Naive thymus-derived CD4-positive, alpha-beta T cell (primary cell): ENCODE measurements at regions of chr10 and their contacts with region 1.

Region 1: GRCh38 chr10:114304017-114304570 is 65.0 kb downstream of the VWA2 start:
- DNase-seq: peak; percentile 19 to 67 (median 52)
- ATAC-seq: peak; percentile 60
- H3K4me3 ChIP-seq: peak overlapping the region; percentile 68
- H3K4me3 Mint-ChIP-seq: peak overlapping the region; percentile 83 to 94 (median 92)
- H3K27ac ChIP-seq: peak overlapping the region; percentile 6
- H3K27ac Mint-ChIP-seq: peak overlapping the region in 8 of 9 donors; percentile 4 to 86 (median 68)
- H3K4me1 ChIP-seq: peaks cover 4 to 5% of the 10 kb centered on the region in 2 donors
- H3K4me1 Mint-ChIP-seq: peaks cover 9 to 13% (median 12%) of the 10 kb centered on the region in 7 donors
- H3K27me3 ChIP-seq: no peaks in the 10 kb centered on the region
- H3K27me3 Mint-ChIP-seq: no peaks in the 10 kb centered on the region

Region 2: DNA sequence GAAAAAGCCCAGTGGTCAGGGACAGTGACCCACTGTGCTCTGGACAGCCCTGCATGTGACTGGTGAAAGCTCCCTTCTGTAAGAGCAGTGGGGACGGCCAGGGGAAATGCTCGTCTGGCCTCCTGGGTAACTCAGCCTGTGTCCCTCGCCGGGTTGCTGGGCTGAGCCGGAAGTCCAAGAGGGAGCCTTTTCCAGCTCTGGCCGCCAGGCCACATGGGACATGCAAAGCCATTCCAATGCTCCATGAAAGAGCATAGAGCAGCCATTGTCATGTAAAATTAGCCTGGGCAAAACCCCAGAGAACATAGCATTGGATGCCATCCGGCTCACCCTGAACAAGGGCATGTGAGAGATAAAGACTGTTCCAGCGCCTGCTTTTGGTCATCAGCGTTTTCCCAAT is 325.3 kb before region 1 on chr10:
- CTCF ChIA-PET with region 1: no interaction called
- POLR2A ChIA-PET with region 1: no interaction called
- intact Hi-C with region 1: no loop called
- DNase-seq: no peak
- ATAC-seq: no peak
- H3K4me3 ChIP-seq: no peak overlapping the region
- H3K4me3 Mint-ChIP-seq: no peak overlapping the region
- H3K27ac ChIP-seq: no peak overlapping the region
- H3K27ac Mint-ChIP-seq: no peak overlapping the region
- H3K4me1 ChIP-seq: peaks cover 5 to 10% of the 10 kb centered on the region in 2 donors
- H3K4me1 Mint-ChIP-seq: peaks cover 6 to 18% (median 11%) of the 10 kb centered on the region in 7 donors
- H3K27me3 ChIP-seq: no peaks in the 10 kb centered on the region
- H3K27me3 Mint-ChIP-seq: peaks cover 0 to 53% (median 15%) of the 10 kb centered on the region in 5 donors

Region 3: GRCh38 chr10:114288424-114289095 is 15.5 kb before region 1 on chr10:
- CTCF ChIA-PET with region 1: no interaction called
- POLR2A ChIA-PET with region 1: no interaction called
- intact Hi-C with region 1: no loop called
- DNase-seq: no peak
- ATAC-seq: no peak
- H3K4me3 ChIP-seq: no peak overlapping the region
- H3K4me3 Mint-ChIP-seq: no peak overlapping the region
- H3K27ac ChIP-seq: no peak overlapping the region
- H3K27ac Mint-ChIP-seq: no peak overlapping the region
- H3K4me1 ChIP-seq: no peaks in the 10 kb centered on the region
- H3K4me1 Mint-ChIP-seq: peaks cover 0 to 2% (median 0%) of the 10 kb centered on the region in 7 donors
- H3K27me3 ChIP-seq: no peaks in the 10 kb centered on the region
- H3K27me3 Mint-ChIP-seq: no peaks in the 10 kb centered on the region

Region 4: DNA sequence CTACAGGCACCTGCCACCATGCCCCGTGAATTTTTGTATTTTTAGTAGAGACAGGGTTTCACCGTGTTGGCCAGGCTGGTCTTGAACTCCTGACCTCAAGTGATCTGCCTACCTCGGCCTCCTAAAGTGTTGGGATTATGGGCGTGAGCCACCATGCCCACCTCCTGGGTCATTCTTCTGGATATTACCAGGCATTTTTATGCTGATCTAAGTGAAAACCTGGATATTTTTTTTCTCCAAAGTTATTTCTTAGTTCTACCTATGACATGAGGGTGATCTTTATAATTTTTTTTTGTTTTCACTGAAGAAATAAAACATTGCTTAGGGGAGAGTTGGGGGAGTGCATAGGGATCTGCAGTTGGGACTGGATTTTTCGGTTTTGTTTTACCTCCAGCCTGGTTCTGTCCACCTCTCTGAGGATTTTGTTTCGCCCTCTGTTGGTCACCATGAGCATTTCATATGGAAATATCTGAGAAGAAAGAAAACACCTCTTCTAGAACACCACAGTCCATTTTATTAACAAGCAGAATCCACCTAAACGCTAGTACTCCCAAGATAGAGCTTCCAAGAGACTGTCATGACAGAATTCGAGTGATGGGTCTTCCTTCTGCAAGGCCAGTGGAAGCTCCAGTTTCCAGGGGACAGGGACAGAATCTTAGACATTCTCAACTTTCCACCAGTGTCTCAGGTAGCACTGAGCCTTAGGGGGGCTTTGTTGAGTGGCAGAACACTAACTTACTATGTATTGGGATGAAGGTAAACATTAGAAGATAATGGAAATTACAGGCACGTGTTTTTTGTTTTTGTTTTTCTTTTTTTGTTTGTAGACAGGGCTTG is 133.6 kb after region 1 on chr10:
- CTCF ChIA-PET with region 1: no interaction called
- POLR2A ChIA-PET with region 1: no interaction called
- intact Hi-C with region 1: loop called in 1 of 2 experiments (anchors 5 kb)
- DNase-seq: no peak
- ATAC-seq: no peak
- H3K4me3 ChIP-seq: no peak overlapping the region
- H3K4me3 Mint-ChIP-seq: no peak overlapping the region
- H3K27ac ChIP-seq: no peak overlapping the region
- H3K27ac Mint-ChIP-seq: peak overlapping the region in 8 of 9 donors; percentile 2 to 82 (median 30)
- H3K4me1 ChIP-seq: no peaks in the 10 kb centered on the region
- H3K4me1 Mint-ChIP-seq: peaks cover 0 to 2% (median 0%) of the 10 kb centered on the region in 7 donors
- H3K27me3 ChIP-seq: no peaks in the 10 kb centered on the region
- H3K27me3 Mint-ChIP-seq: no peaks in the 10 kb centered on the region

Region 5: DNA sequence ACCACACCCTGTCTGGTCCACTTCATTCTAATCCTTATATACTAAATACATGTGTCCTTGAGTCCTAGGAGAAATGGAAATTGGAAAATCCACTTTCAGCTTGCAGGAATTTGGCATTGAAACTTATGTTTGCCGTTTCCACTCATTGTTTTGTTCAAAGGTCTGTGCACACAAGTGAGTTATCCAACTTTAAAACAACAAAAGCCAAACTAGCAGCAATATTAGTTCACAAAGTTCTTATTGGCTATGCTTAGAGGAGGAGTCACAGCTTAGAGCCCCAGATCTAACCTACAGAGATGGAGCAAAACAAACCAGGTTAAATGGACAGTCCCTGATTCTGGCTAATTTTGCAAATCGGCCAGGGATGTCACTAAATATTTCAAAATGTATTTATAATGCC is 144.8 kb after region 1 on chr10:
- CTCF ChIA-PET with region 1: no interaction called
- POLR2A ChIA-PET with region 1: no interaction called
- intact Hi-C with region 1: no loop called
- DNase-seq: no peak
- ATAC-seq: no peak
- H3K4me3 ChIP-seq: no peak overlapping the region
- H3K4me3 Mint-ChIP-seq: no peak overlapping the region
- H3K27ac ChIP-seq: no peak overlapping the region
- H3K27ac Mint-ChIP-seq: peak overlapping the region in 3 of 9 donors; percentile 10 to 42 (median 17)
- H3K4me1 ChIP-seq: no peaks in the 10 kb centered on the region
- H3K4me1 Mint-ChIP-seq: peaks cover 0 to 35% (median 22%) of the 10 kb centered on the region in 7 donors
- H3K27me3 ChIP-seq: no peaks in the 10 kb centered on the region
- H3K27me3 Mint-ChIP-seq: no peaks in the 10 kb centered on the region

Region 6: DNA sequence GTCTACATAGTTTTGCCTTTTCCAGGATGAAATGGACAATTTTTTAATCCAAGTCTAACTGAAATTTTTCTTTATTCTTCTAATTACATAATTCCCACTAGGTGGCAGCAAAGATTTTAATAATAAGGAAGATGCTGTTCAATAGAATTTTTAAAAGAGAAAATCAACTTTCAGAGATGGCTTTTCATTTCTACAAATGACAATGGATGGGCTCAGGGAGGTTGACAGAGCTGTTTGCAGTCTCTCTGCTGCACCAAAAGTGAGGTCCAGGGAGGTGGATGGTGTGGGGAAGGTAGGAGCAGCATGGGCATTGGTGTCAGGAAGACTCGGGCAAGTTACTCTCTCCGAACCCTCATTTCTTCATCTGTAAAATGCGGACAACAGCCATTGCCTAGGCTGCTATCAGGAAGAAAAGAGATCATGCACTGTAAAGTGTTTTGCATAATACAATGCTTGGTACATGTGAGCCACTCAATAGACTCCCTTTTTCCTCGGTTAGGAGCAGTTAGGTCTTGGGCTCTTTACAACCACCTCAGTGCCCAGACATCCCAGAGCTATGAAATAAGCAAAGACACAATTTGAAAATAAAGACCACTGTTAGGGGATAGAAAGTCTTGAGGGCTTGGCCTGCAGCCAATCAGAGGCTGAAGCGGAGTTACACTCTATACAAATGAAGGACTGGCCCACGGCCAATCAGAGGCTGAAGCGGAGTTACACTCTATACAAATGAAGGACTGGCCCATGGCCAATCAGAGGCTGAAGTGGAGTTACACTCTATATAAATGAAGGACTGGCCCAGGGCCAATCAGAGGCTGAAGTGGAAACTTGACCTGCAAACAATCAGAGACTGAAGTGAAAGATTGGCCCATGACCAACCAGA is 246.9 kb after region 1 on chr10:
- CTCF ChIA-PET with region 1: interaction called, 3 read pairs
- POLR2A ChIA-PET with region 1: no interaction called
- intact Hi-C with region 1: loop called in 1 of 2 experiments (anchors 1 kb)
- DNase-seq: peak in 5 of 9 donors; percentile 33 to 50 (median 40)
- ATAC-seq: peak; percentile 26
- H3K4me3 ChIP-seq: no peak overlapping the region
- H3K4me3 Mint-ChIP-seq: no peak overlapping the region
- H3K27ac ChIP-seq: no peak overlapping the region
- H3K27ac Mint-ChIP-seq: peak overlapping the region in 5 of 9 donors; percentile 1 to 61 (median 20)
- H3K4me1 ChIP-seq: peaks cover 6 to 29% of the 10 kb centered on the region in 2 donors
- H3K4me1 Mint-ChIP-seq: peaks cover 16 to 37% (median 33%) of the 10 kb centered on the region in 7 donors
- H3K27me3 ChIP-seq: no peaks in the 10 kb centered on the region
- H3K27me3 Mint-ChIP-seq: peaks cover 0 to 5% (median 0%) of the 10 kb centered on the region in 5 donors

Region 7: GRCh38 chr10:114779803-114780609 is 475.9 kb after region 1 on chr10:
- CTCF ChIA-PET with region 1: interaction called, 66 read pairs
- POLR2A ChIA-PET with region 1: no interaction called
- intact Hi-C with region 1: no loop called
- DNase-seq: no peak
- ATAC-seq: no peak
- H3K4me3 ChIP-seq: no peak overlapping the region
- H3K4me3 Mint-ChIP-seq: no peak overlapping the region
- H3K27ac ChIP-seq: no peak overlapping the region
- H3K27ac Mint-ChIP-seq: no peak overlapping the region
- H3K4me1 ChIP-seq: no peaks in the 10 kb centered on the region
- H3K4me1 Mint-ChIP-seq: peaks cover 0 to 12% (median 0%) of the 10 kb centered on the region in 7 donors
- H3K27me3 ChIP-seq: no peaks in the 10 kb centered on the region
- H3K27me3 Mint-ChIP-seq: peaks cover 7 to 29% (median 20%) of the 10 kb centered on the region in 5 donors

Region 8: DNA sequence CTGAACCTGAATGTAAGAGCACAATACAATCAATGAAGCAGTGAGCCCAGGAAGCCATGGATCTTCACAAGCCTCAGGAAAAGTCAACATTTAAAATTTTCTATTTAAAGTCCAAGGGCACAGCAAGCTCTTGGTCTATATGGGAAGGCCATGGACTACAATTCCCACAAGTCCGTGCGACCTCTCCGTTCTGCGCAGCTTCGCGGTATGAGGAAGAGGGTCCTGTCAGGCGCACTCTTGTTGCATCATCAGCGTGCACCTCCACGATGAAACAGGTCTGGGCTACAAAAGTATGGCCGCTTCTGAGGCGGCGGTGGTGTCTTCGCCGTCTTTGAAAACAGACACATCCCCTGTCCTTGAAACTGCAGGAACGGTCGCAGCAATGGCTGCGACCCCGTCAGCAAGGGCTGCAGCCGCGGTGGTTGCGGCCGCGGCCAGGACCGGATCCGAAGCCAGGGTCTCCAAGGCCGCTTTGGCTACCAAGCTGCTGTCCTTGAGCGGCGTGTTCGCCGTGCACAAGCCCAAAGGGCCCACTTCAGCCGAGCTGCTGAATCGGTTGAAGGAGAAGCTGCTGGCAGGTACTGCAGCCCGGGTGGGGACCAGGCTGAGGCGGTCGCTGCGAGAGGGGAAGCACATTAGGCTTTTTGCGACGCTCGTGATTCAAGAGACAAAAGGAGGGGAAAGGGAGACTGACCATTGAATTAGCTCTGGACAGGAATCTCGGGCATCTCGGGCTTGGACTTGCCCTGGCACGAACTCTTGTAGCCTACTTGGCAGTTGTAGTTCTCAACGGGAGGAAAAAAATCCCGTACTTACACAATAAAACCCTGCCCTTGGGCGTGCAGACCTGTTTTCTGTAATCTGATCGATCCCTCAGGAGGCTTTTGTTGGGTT is 634.1 kb after region 1 on chr10 and contains the start of gene TRUB1:
- CTCF ChIA-PET with region 1: no interaction called
- POLR2A ChIA-PET with region 1: no interaction called
- intact Hi-C with region 1: loop called in 1 of 2 experiments (anchors 1 kb)
- DNase-seq: peak; percentile 59 to 91 (median 87)
- ATAC-seq: peak; percentile 100
- H3K4me3 ChIP-seq: peak within 1 kb of the TSS; percentile 87
- H3K4me3 Mint-ChIP-seq: peak within 1 kb of the TSS; percentile 94 to 99 (median 96)
- H3K27ac ChIP-seq: peak within 1 kb of the TSS; percentile 79
- H3K27ac Mint-ChIP-seq: peak within 1 kb of the TSS; percentile 95 to 98 (median 96)
- H3K4me1 ChIP-seq: peaks cover 12 to 23% of the 10 kb centered on the region in 2 donors
- H3K4me1 Mint-ChIP-seq: peaks cover 20 to 43% (median 31%) of the 10 kb centered on the region in 7 donors
- H3K27me3 ChIP-seq: no peaks in the 10 kb centered on the region
- H3K27me3 Mint-ChIP-seq: no peaks in the 10 kb centered on the region
- total RNA-seq, gene TRUB1: 6.8 to 14.6 (median 12.9) TPM